Activated CD4-positive, alpha-beta memory T cell treated with anti-CD3 and anti-CD28 coated beads for 36 hours (primary cell): ENCODE measurements at regions of chr17 and their contacts with region 1.

Region 1: DNA sequence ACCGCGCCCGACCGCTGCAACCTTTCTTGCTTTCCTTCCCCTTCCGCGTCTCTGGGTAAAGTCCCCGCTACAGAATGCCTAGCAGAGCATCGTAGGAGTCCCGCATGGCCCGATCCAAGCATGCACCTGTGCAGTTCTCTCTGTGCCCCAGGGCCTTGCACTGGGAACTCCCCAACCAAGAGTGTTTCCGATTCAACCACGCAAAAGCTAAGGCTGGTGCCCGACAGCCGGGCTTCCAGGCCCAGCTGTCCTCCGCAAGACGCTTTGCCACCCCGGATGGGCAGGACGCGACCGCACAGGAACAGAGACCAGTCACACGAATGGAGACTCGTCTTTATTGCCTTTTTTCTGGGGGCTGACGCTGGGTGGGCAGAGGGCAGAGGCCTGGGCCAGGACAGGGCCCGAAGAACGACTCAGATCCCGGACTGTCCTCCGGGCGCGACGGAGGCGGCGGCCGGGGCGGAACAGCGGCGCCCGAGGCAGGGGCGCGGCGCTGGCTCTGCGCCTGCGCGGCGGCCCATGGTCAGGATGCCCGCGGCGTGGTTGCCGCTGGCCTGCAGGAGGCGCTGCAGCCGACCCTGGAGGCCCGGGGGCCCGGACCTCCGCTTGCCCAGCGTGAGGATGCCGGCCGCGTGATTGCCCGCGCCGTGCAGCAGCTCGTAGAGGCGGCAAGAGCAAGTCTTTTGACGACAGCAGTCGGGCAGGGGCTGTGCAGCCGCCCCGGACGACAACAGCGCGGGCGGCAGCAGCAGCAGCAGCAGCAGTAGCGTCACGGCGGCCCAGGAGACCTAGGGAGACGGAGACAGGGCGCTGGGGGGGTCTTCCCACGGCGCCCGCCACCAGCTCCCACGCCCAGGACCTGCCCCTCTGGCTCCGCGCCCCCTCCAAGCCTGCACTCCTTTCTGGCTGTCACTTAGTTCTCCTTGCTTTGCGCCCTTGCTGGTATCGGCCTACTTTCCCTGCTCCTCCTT is 1.2 kb downstream of the HCRT start:
- DNase-seq: peak; percentile 88
- H3K4me3 Mint-ChIP-seq: peak overlapping the region; percentile 80
- H3K27ac Mint-ChIP-seq: peak overlapping the region; percentile 76
- H3K4me1 Mint-ChIP-seq: peaks cover 49% of the 10 kb centered on the region
- H3K27me3 Mint-ChIP-seq: no peaks in the 10 kb centered on the region

Region 2: DNA sequence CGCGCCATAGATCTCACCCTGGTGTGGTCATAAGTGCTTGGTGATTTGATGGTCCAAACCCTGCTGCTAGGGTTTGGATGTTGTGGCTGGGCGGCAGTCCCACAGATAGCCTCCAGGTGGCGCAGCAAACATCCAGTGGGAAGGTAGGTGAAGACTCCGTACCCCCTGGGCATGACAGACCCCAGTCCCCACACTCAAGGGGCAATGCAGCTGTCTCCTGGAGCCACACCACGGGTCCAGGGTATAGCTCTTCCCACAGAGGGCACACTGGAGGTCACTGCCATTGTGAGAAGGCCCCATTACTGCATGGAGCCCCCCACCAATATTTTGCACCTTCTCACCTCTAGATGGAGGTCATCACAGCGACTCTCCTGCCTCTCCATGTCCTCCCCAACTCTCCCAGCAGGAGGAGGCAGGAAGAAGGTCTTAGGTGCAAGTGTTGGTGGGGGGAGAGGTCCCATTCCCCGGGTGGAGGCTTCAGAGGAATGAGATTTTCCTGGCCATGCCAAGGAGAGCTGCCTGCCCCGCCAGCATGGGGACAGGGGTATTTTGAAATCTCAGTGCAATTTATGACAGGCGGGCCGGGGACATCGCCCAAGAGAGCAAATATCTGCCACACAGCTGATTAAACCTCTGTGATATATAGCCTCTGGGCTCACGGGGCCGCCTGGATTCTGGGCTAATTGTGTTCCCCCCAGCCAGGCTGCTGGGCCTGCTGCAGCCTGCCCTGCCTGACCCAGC is 116.5 kb before region 1 on chr17:
- CTCF ChIA-PET with region 1: interaction called, 10 read pairs
- POLR2A ChIA-PET with region 1: no interaction called
- intact Hi-C with region 1: no loop called
- DNase-seq: peak; percentile 82
- H3K4me3 Mint-ChIP-seq: no peak overlapping the region
- H3K27ac Mint-ChIP-seq: no peak overlapping the region
- H3K4me1 Mint-ChIP-seq: peaks cover 5% of the 10 kb centered on the region
- H3K27me3 Mint-ChIP-seq: peaks cover 13% of the 10 kb centered on the region

Region 3: GRCh38 chr17:42132941-42133340 is 51.1 kb before region 1 on chr17:
- CTCF ChIA-PET with region 1: interaction called, 14 read pairs
- POLR2A ChIA-PET with region 1: interaction called, 4 read pairs
- intact Hi-C with region 1: no loop called
- DNase-seq: peak; percentile 69
- H3K4me3 Mint-ChIP-seq: no peak overlapping the region
- H3K27ac Mint-ChIP-seq: peak overlapping the region; percentile 77
- H3K4me1 Mint-ChIP-seq: peaks cover 58% of the 10 kb centered on the region
- H3K27me3 Mint-ChIP-seq: no peaks in the 10 kb centered on the region

Region 4: DNA sequence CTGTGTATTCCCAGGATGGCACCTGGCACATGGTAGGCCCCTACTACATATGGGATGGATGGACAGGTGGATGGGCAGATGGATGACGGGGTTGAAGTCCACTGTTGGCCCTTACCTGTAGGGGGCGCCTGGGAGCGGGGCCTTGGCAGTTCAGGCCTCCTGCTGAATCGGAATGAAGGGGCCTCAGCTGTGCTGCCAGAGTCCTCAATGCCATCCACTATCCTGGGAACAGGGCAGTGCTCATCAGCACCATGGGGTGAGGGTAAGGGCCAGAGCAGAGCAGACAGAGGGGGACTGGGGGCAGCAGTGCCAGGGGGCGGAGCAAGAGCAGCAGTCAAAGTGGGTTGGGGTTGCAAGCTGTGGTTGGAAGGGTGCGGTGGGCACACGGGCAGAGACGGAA is 20.9 kb before region 1 on chr17:
- CTCF ChIA-PET with region 1: interaction called, 10 read pairs
- POLR2A ChIA-PET with region 1: no interaction called
- intact Hi-C with region 1: no loop called
- DNase-seq: peak; percentile 71
- H3K4me3 Mint-ChIP-seq: no peak overlapping the region
- H3K27ac Mint-ChIP-seq: no peak overlapping the region
- H3K4me1 Mint-ChIP-seq: no peaks in the 10 kb centered on the region
- H3K27me3 Mint-ChIP-seq: no peaks in the 10 kb centered on the region

Region 5: DNA sequence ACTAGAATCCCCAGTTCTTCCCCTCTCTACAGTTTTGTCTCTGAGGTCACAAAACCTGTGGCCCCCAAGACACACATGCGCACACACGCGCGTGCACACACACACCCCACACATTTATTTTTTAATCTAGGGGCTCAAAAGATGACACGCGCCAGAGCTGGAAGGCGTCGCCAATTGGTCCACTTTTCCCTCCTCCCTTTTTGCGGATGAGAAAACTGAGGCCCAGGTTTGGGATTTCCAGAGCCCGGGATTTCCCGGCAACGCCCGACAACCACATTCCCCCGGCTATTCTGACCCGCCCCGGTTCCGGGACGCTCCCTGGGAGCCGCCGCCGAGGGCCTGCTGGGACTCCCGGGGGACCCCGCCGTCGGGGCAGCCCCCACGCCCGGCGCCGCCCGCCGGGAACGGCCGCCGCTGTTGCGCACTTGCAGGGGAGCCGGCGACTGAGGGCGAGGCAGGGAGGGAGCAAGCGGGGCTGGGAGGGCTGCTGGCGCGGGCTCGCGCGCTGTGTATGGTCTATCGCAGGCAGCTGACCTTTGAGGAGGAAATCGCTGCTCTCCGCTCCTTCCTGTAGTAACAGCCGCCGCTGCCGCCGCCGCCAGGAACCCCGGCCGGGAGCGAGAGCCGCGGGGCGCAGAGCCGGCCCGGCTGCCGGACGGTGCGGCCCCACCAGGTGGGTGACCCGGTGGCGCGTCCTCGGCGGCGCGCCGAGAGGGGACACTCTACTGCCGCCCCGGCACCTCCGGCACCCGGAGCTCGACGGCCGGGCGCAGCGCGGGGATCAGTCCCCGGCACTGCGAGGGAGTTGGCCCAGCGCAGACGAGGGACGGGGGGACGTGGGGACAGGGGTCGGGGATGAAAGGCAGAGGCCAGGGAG is 104.1 kb after region 1 on chr17 and contains the start of gene STAT5A:
- CTCF ChIA-PET with region 1: no interaction called
- POLR2A ChIA-PET with region 1: no interaction called
- intact Hi-C with region 1: loop called (anchors 5 kb)
- DNase-seq: peak; percentile 86
- H3K4me3 Mint-ChIP-seq: peak within 1 kb of the TSS; percentile 82
- H3K27ac Mint-ChIP-seq: peak within 1 kb of the TSS; percentile 94
- H3K4me1 Mint-ChIP-seq: peaks cover 60% of the 10 kb centered on the region
- H3K27me3 Mint-ChIP-seq: no peaks in the 10 kb centered on the region
- total RNA-seq, gene STAT5A: 211 to 215 TPM